Cardiac septum (tissue), 1 donor: ENCODE measurements at regions of chr17 and their contacts with region 1.

Region 1: DNA sequence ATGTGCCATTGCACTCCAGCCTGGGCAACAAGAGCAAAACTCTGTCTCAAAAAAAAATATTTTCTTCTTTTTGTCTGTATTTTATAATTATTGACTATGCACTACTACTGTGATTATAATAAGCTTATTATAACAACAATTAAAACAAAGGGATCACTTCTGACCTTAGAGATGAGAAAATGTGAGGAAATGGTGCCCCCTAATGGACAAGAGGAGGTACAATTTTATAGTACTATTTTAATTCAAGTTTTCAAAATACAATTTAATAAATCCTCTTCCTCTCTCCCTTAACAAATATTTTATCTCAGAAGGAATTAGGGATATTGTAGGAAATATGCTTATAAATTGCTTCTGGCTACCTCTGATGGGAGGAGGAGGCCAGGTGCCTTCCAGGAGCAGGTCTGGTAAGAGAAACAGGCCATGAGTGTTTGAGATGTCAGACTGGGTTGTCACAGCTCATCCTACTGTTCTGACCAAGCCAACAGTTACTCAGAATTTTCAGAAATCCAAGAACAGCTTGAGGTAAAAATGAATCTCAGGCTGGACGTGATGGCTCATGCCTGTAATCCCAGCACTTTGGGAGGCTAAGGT is 14.0 kb downstream of the VPS53 start:
- DNase-seq: no peak

Region 2: DNA sequence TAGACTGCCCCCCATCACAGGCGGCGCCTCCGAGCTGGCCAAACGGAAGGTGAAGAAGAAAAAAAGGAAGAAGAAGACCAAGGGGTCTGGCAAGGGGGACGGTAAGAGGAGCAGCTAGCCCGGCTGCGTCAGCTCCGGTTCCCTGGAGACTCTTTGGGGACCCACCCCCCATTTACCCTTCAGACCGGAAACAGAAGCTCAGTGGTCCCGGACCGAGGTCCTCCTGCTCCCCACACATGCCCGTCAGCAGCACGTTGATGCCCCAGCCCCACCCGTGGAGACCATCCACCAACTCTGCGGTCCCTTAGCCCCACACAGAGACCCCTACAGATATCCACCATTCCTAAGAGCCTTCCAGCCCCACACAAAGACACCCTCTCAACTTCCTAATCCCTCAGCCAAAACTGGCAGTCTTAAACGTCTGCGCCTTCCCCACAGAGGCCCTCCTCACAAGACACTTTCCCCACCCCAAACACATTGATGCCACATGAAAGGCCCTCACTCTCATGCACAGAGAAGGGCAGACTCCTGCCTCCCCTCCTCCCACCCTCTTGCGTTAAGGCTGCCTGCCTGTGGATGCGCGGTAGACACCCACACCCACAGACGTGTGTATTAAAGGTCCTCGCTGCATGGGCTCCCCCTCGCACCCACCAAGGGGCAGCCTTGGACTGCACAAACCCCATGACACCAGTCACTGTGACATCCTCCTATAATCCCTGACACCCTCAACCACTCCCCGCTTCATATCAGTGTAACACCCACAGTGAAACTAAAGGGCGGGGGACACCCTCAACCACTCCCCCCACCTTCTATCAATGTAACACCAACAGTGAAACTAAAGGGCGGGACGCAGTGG is 289.8 kb before region 1 on chr17:
- intact Hi-C with region 1: loop called (anchors 1 kb)
- DNase-seq: no peak